Thyroid gland (tissue), 4 donors: ENCODE measurements at regions of chr2 and their contacts with region 1.

Region 1: GRCh38 chr2:71798266-71799012 is 345.1 kb downstream of the DYSF start:
- DNase-seq: peak; percentile 29 to 30
- H3K4me3 ChIP-seq: no peak overlapping the region
- H3K27ac ChIP-seq: no peak overlapping the region
- H3K4me1 ChIP-seq: peaks cover 0 to 7% of the 10 kb centered on the region in 2 donors
- H3K27me3 ChIP-seq: no peaks in the 10 kb centered on the region
- CTCF ChIP-seq: peak; percentile 57 to 81 (median 68)
- POLR2A ChIP-seq: no peak

Region 2: DNA sequence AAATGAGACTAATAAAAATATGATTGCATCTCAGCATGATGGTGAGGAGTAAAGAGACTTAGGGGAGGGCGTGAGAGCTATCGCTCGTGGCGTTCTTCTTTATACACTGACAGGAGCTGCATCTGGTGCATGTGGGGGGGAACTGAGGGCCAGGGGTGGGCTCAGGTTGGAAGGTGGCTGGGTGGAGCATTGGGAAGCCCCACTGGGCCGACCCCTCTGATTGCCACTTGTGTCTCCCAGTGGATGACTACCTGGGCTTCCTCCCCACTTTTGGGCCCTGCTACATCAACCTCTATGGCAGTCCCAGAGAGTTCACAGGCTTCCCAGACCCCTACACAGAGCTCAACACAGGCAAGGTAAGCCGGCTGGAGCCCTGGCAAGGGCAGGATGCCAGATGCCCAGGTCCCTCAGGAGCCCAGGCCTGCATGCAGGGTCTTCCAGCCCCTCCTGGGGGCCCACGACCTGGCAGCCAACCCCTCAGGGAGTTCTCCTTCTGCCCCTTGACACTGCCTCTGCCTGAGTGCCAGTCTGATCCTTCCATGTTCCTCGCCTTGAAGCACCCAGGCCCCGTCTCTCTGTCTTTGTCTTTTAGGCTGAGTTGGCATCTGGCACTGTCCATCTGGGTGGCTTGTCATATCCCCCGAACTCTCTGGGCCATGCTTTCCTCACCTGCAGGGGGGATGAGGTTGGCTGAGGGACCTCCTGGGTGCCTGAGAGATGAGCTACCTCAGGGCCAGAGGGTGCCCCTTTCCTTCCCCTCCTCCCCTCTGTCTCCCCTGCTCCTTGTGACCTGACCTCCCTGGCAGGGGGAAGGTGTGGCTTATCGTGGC is 247.4 kb before region 1 on chr2:
- intact Hi-C with region 1: loop called (anchors 5 kb)
- DNase-seq: no peak
- H3K4me3 ChIP-seq: no peak overlapping the region
- H3K27ac ChIP-seq: no peak overlapping the region
- H3K4me1 ChIP-seq: peaks cover 0 to under 1% of the 10 kb centered on the region in 2 donors
- H3K27me3 ChIP-seq: no peaks in the 10 kb centered on the region
- CTCF ChIP-seq: no peak
- POLR2A ChIP-seq: no peak

Region 3: DNA sequence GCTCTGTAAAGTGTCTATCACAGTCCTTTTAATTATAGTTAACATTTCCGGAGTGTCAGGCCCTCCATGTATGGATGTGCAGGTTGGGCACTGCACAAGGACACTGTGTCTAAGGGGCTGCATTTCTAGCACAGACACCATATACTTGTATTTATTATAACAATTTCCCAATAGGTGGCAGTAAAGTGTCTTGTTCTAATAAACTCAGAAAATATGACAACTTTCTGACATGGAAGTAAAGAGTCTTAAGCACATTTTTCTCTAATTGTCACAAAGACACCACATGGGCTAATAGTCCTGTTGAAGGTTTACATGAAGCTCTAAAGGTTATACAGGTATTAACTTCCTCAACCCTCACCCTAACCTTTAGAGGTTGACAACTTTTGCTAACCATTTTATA is 188.5 kb before region 1 on chr2:
- intact Hi-C with region 1: loop called (anchors 5 kb)
- DNase-seq: no peak
- H3K4me3 ChIP-seq: no peak overlapping the region
- H3K27ac ChIP-seq: no peak overlapping the region
- H3K4me1 ChIP-seq: peaks cover 0 to 14% of the 10 kb centered on the region in 2 donors
- H3K27me3 ChIP-seq: no peaks in the 10 kb centered on the region
- CTCF ChIP-seq: peak in 5 of 6 experiments; percentile 14 to 46 (median 43)
- POLR2A ChIP-seq: no peak